ENCODE measurements at regions of chr15 and their contacts with region 1.

Region 1: DNA sequence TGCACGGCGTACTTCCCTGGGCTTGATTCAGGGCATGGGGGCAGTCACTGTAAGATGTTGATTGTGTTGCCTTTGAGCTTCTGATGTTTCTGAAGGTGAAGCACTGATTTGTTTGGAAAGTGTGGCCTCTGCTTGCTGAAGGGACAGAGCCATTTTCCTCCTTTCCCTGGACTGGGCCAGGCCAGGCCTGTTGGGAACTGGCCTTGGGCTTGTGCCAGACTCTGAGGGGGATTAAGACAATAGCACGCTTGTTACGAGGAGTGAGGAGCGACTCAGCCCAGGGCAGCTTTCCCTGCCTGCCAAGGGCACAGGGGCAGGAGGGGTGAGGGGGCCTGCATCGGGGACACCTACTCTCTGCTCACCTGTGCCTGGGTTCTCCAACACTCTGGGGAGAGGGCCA is 42.9 kb downstream of the LINGO1 start:
- DNase-seq: peak in 3 of 5 donors; percentile 45 to 49 (median 46)
- ATAC-seq: peak in 2 of 4 donors; percentile 14 to 54
- H3K4me3 ChIP-seq: no peak overlapping the region
- H3K27ac ChIP-seq: no peak overlapping the region
- H3K4me1 ChIP-seq: no peaks in the 10 kb centered on the region
- H3K27me3 ChIP-seq: no peaks in the 10 kb centered on the region
- CTCF ChIP-seq: no peak
- POLR2A ChIP-seq: no peak

Region 2: GRCh38 chr15:77550292-77551251 is 39.3 kb before region 1 on chr15:
- intact Hi-C with region 1: no loop called
- DNase-seq: no peak
- ATAC-seq: no peak
- H3K4me3 ChIP-seq: no peak overlapping the region
- H3K27ac ChIP-seq: no peak overlapping the region
- H3K4me1 ChIP-seq: peaks cover 0 to 10% (median 8%) of the 10 kb centered on the region in 12 donors
- H3K27me3 ChIP-seq: no peaks in the 10 kb centered on the region
- CTCF ChIP-seq: no peak
- POLR2A ChIP-seq: no peak

Region 3: DNA sequence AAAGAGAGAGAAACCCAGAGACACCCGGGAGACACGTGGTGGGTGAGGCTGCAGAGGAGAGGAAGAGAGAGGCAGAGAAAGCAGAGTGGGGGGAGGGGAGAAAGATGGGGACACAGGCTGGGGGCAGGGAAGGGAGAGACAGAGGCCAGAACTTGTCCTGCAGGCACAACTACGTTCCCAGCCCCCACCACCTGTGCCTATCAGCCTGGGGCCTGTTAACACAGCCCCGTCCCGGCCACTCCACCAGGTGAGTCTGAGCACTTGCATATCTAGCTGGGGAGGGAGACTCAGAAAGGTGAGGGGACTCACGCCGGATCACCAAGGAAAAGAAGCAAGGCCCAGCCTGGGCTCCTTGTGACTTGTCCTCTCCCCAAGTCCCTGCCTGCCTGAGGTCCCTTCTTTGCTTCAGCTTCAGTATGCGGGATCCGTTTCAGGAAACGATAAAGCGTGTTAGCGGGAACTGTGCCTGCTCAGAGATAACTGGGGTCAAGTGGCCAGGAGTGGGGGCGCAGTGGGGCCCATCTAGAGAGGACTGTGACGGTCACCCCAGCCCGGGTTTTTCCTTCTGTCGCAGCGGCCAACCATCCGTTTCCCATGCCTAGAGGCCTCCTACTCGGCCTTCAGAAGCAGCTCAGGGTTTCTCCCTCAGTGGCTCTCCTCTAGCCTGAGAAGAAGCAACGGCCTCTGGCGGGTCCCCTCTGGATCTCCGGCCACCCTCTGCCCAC is 32.5 kb after region 1 on chr15:
- intact Hi-C with region 1: loop called in 1 of 10 experiments (anchors 5 kb)
- DNase-seq: no peak
- ATAC-seq: peak in 1 of 4 donors; percentile 27
- H3K4me3 ChIP-seq: no peak overlapping the region
- H3K27ac ChIP-seq: no peak overlapping the region
- H3K4me1 ChIP-seq: peaks cover 0 to 12% (median 0%) of the 10 kb centered on the region in 12 donors
- H3K27me3 ChIP-seq: no peaks in the 10 kb centered on the region
- CTCF ChIP-seq: no peak
- POLR2A ChIP-seq: no peak